Thyroid gland (tissue), 4 donors: ENCODE measurements at regions of chr1 and their contacts with region 1.

Region 1: DNA sequence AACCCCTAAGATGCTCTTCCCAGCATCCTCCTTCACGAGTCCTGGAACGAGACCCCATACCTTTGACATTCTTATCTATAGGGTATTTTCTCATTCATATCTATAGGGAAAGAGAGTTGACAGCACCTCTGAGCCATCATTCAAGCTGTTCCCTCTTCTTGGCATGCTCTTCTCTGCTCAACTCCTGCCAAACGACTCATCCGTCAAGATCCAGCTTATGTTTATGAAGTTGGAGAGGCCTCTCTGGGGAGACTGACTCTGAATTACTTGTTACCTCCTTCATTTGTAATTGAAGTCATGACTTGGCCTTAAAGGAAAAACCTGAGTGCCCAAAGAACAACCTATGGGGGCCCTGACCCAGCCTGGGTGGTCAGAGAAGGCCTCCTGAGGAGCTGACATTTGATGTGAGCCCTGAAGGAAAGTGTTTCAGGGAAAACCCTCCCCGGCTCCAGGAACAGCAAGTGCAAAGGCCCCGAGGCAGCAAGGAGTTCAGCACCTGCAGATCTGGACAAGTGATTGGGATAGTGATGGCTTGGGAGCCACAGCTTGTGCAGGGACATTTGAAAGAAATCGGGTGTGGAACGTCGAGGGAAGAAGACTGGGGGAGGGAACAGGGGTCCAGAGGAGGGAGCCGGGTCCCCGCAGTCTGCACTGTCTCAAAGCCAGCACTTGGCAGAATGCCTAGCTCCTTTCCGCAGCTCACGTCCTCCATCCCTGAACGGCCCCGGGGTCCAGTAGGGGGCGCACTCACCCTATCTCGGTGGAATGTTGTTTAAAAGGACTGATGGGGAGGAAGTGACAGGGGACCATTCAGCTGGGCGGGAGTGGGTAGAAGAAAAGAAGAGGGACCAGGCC is 14.0 kb upstream of the CDA start:
- DNase-seq: peak; percentile 60 to 69
- H3K4me3 ChIP-seq: no peak overlapping the region
- H3K27ac ChIP-seq: no peak overlapping the region
- H3K4me1 ChIP-seq: no peaks in the 10 kb centered on the region
- H3K27me3 ChIP-seq: no peaks in the 10 kb centered on the region
- CTCF ChIP-seq: peak in 5 of 6 experiments; percentile 21 to 57 (median 37)
- POLR2A ChIP-seq: no peak

Region 2: GRCh38 chr1:20603527-20604464 is 28.9 kb after region 1 on chr1:
- intact Hi-C with region 1: no loop called
- DNase-seq: no peak
- H3K4me3 ChIP-seq: no peak overlapping the region
- H3K27ac ChIP-seq: no peak overlapping the region
- H3K4me1 ChIP-seq: no peaks in the 10 kb centered on the region
- H3K27me3 ChIP-seq: no peaks in the 10 kb centered on the region
- CTCF ChIP-seq: no peak
- POLR2A ChIP-seq: no peak

Region 3: GRCh38 chr1:20640183-20640597 is 65.3 kb after region 1 on chr1:
- intact Hi-C with region 1: loop called (anchors 10 kb)
- DNase-seq: peak; percentile 18 to 27
- H3K4me3 ChIP-seq: no peak overlapping the region
- H3K27ac ChIP-seq: no peak overlapping the region
- H3K4me1 ChIP-seq: peaks cover 1 to 5% of the 10 kb centered on the region in 2 donors
- H3K27me3 ChIP-seq: no peaks in the 10 kb centered on the region
- CTCF ChIP-seq: peak; percentile 38 to 73 (median 48)
- POLR2A ChIP-seq: no peak